Panc1 (cell line): ENCODE measurements at regions of chr1 and their contacts with region 1.

Region 1: GRCh38 chr1:199551967-199552565 is 475.4 kb upstream of the NR5A2 start:
- DNase-seq: peak; percentile 56
- ATAC-seq: no peak
- H3K4me3 ChIP-seq: no peak overlapping the region
- H3K27ac ChIP-seq: no peak overlapping the region
- H3K4me1 ChIP-seq: 0 out of 2 replicates have a peak, but pooled peaks cover 3% of the 10 kb centered on the region
- H3K27me3 ChIP-seq: no peaks in the 10 kb centered on the region
- CTCF ChIP-seq: peak; percentile 81; the same call in 1 of the 2 replicates

Region 2: GRCh38 chr1:198756470-198756869 is 795.6 kb before region 1 on chr1:
- CTCF ChIA-PET with region 1: no interaction called
- POLR2A ChIA-PET with region 1: no interaction called
- in situ Hi-C with region 1: no loop called
- intact Hi-C with region 1: loop called (anchors 5 kb)
- DNase-seq: no peak
- ATAC-seq: peak; percentile 74
- H3K4me3 ChIP-seq: no peak overlapping the region
- H3K27ac ChIP-seq: no peak overlapping the region
- H3K4me1 ChIP-seq: no peaks in the 10 kb centered on the region
- H3K27me3 ChIP-seq: no peaks in the 10 kb centered on the region
- CTCF ChIP-seq: no peak; the same call in 1 of the 2 replicates

Region 3: DNA sequence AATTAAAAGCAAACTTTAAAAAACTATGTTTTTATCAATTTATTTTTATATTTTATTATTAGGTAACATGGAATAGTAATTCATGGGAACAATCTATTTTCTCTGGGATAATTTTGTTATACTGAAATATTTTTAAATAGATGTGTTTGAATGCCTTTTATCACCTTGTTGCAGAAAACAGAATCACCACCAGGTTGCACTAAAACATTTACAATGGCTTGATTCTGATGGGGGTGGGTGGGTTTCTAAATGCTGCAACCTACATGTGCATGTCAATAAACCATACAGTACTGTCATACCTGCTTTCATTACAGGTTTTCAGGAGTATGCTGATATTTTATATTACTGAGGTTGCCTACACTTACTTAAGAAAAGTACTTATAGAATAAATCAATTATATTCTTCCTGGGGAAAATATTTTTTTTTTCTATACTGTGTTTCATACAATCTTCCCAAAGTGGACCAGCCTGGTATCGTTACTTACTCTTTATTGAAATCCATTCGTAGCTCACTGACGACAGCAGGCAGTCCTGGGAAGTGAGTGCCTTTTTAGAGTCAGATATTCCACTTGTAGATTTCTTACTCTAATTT is 780.4 kb before region 1 on chr1:
- CTCF ChIA-PET with region 1: no interaction called
- POLR2A ChIA-PET with region 1: no interaction called
- in situ Hi-C with region 1: no loop called
- intact Hi-C with region 1: loop called (anchors 5 kb)
- DNase-seq: no peak
- ATAC-seq: no peak
- H3K4me3 ChIP-seq: no peak overlapping the region
- H3K27ac ChIP-seq: no peak overlapping the region
- H3K4me1 ChIP-seq: no peaks in the 10 kb centered on the region
- H3K27me3 ChIP-seq: no peaks in the 10 kb centered on the region
- CTCF ChIP-seq: peak; percentile 60; the same call in 1 of the 2 replicates

Region 4: DNA sequence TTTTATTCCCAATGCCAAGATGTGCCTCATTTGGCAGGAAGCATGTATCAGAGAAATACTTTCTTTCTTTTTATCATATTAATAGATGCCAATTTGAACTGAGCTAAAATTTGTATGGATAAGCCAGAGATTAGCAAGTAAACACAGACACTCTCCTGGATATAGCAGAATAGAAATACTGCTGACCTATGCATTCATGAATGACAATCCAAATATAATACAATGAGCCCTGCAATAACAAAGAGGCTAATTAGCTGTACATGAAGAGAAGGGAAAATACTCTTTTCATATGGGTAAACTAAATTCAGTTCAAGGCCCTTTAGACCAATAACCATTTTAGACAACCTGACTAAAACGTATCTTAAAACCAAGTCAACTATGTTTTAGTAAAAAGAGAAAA is 87.4 kb after region 1 on chr1:
- CTCF ChIA-PET with region 1: no interaction called
- POLR2A ChIA-PET with region 1: no interaction called
- in situ Hi-C with region 1: no loop called
- intact Hi-C with region 1: no loop called
- DNase-seq: no peak
- ATAC-seq: no peak
- H3K4me3 ChIP-seq: no peak overlapping the region
- H3K27ac ChIP-seq: no peak overlapping the region
- H3K4me1 ChIP-seq: no peaks in the 10 kb centered on the region
- H3K27me3 ChIP-seq: no peaks in the 10 kb centered on the region
- CTCF ChIP-seq: no peak